ENCODE measurements at regions of chr16 and their contacts with region 1.

Region 1: GRCh38 chr16:25177831-25178688 is 38.7 kb upstream of the AQP8 start:
- DNase-seq: no peak
- ATAC-seq: no peak
- H3K4me3 ChIP-seq: no peak overlapping the region
- H3K4me3 Mint-ChIP-seq: no peak overlapping the region
- H3K27ac ChIP-seq: no peak overlapping the region
- H3K27ac Mint-ChIP-seq: peak overlapping the region in 2 of 9 donors; percentile 4 to 57
- H3K4me1 ChIP-seq: no peaks in the 10 kb centered on the region
- H3K4me1 Mint-ChIP-seq: peaks cover 0 to 10% (median 0%) of the 10 kb centered on the region in 7 donors
- H3K27me3 ChIP-seq: no peaks in the 10 kb centered on the region
- H3K27me3 Mint-ChIP-seq: no peaks in the 10 kb centered on the region

Region 2: DNA sequence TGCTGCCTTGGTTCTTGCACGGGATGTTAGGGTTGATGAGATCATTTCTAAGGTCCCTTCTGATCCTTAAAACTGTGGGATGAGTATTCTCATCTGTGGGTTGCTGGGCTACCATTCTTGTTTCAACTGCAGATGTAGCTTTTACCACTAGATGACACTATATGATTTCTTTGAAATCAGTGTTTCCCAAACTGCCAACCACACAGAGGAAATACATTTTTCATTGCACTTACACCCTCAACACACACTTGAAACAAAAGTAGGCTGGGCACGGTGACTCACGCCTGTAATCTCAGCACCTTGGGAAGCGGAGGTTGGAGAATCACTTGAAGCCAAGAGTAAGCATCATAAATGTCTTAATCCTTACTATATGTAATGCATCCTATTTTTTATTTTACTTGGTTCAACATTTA is 51.2 kb before region 1 on chr16:
- CTCF ChIA-PET with region 1: no interaction called
- POLR2A ChIA-PET with region 1: no interaction called
- intact Hi-C with region 1: loop called in 1 of 2 experiments (anchors 5 kb)
- DNase-seq: peak in 6 of 9 donors; percentile 13 to 55 (median 34)
- ATAC-seq: peak; percentile 75
- H3K4me3 ChIP-seq: no peak overlapping the region
- H3K4me3 Mint-ChIP-seq: peak overlapping the region in 3 of 10 donors; percentile 34 to 62 (median 57)
- H3K27ac ChIP-seq: no peak overlapping the region
- H3K27ac Mint-ChIP-seq: peak overlapping the region; percentile 2 to 77 (median 44)
- H3K4me1 ChIP-seq: no peaks in the 10 kb centered on the region
- H3K4me1 Mint-ChIP-seq: peaks cover 14 to 50% (median 43%) of the 10 kb centered on the region in 7 donors
- H3K27me3 ChIP-seq: no peaks in the 10 kb centered on the region
- H3K27me3 Mint-ChIP-seq: no peaks in the 10 kb centered on the region